Gastrocnemius medialis (tissue), 4 donors: ENCODE measurements at regions of chr19 and their contacts with region 1.

Region 1: GRCh38 chr19:55605207-55605636 is 225 bp upstream of the ZNF865 start:
- DNase-seq: peak; percentile 96
- ATAC-seq: peak; percentile 77 to 79
- H3K4me3 ChIP-seq: peak overlapping the region; percentile 68 to 97 (median 80)
- H3K27ac ChIP-seq: peak overlapping the region; percentile 91 to 99 (median 94)
- H3K4me1 ChIP-seq: peaks cover 27 to 38% of the 10 kb centered on the region in 2 donors
- H3K27me3 ChIP-seq: no peaks in the 10 kb centered on the region
- CTCF ChIP-seq: no peak
- POLR2A ChIP-seq: peak in 1 of 2 donors; percentile 36

Region 2: DNA sequence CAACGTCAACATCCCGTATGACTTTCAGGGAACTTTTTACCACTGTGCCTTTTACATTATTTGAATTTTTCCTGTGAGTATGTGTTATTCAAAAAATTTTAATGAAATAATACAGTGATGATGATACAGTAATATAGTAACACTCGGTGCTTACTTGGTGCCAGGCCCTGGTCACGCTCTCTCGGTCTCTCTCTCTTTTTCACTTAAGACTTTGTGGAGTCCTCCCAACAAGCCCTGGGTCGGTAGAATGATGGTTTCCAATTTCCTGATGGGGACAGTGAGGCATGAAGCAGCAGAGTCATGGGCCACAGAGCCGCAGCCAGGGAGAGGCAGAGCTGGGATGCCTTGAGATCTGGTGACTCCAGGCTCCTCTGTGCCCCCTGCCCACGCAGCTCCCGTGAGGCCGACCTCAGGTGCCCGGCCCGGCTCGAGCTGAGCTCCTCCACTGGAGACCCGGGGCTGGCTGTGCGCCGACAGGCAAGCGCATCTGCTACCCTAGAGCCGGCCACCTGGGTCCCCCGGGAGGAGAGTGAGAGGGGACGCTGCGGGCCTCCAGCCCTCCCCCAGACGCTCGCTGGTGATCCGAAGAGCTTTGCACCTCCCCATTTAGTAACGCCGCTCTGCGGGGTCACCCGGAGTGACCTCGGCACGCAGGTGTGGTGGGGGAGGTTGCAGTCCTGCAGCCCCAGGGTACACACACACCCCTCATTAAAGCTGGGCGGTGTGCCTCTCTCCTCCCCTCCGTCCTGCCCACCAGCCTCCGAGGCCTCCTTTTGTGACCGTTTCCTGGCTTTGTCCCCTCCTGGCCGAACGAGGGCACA is 55.5 kb before region 1 on chr19:
- in situ Hi-C with region 1: no loop called
- intact Hi-C with region 1: loop called (anchors 2 kb)
- DNase-seq: peak; percentile 88 to 89
- ATAC-seq: peak; percentile 67 to 72
- H3K4me3 ChIP-seq: peak overlapping the region; percentile 31 to 52 (median 42)
- H3K27ac ChIP-seq: peak overlapping the region; percentile 90 to 98 (median 94)
- H3K4me1 ChIP-seq: peaks cover 70 to 74% of the 10 kb centered on the region in 2 donors
- H3K27me3 ChIP-seq: no peaks in the 10 kb centered on the region
- CTCF ChIP-seq: peak in 1 of 5 experiments; percentile 15
- POLR2A ChIP-seq: peak; percentile 20 to 21

Region 3: GRCh38 chr19:55624109-55625003 is 19.1 kb after region 1 on chr19 and contains the start of gene ZNF784:
- in situ Hi-C with region 1: no loop called
- intact Hi-C with region 1: loop called (anchors 1 kb)
- DNase-seq: peak; percentile 89 to 91
- ATAC-seq: peak; percentile 76 to 83
- H3K4me3 ChIP-seq: peak within 1 kb of the TSS; percentile 71 to 77 (median 74)
- H3K27ac ChIP-seq: peak within 1 kb of the TSS; percentile 97 to 99 (median 98)
- H3K4me1 ChIP-seq: peaks cover 30 to 37% of the 10 kb centered on the region in 2 donors
- H3K27me3 ChIP-seq: no peaks in the 10 kb centered on the region
- CTCF ChIP-seq: no peak
- POLR2A ChIP-seq: peak; percentile 38 to 49
- total RNA-seq, gene ZNF784: 6.0 to 10.0 (median 8.2) TPM

Region 4: GRCh38 chr19:55667958-55668357 is 62.7 kb after region 1 on chr19:
- in situ Hi-C with region 1: no loop called
- intact Hi-C with region 1: no loop called
- DNase-seq: no peak
- ATAC-seq: no peak
- H3K4me3 ChIP-seq: no peak overlapping the region
- H3K27ac ChIP-seq: no peak overlapping the region
- H3K4me1 ChIP-seq: no peaks in the 10 kb centered on the region
- H3K27me3 ChIP-seq: no peaks in the 10 kb centered on the region
- CTCF ChIP-seq: no peak
- POLR2A ChIP-seq: no peak